Ovary (tissue), 10 donors: ENCODE measurements at regions of chr9 and their contacts with region 1.

Region 1: GRCh38 chr9:79709743-79710674 is 138.2 kb downstream of the TLE4 start:
- DNase-seq: no peak
- H3K4me3 ChIP-seq: no peak overlapping the region
- H3K27ac ChIP-seq: no peak overlapping the region
- H3K4me1 ChIP-seq: no peaks in the 10 kb centered on the region
- H3K27me3 ChIP-seq: no peaks in the 10 kb centered on the region
- CTCF ChIP-seq: no peak
- EP300 ChIP-seq: no peak
- POLR2A ChIP-seq: no peak

Region 2: DNA sequence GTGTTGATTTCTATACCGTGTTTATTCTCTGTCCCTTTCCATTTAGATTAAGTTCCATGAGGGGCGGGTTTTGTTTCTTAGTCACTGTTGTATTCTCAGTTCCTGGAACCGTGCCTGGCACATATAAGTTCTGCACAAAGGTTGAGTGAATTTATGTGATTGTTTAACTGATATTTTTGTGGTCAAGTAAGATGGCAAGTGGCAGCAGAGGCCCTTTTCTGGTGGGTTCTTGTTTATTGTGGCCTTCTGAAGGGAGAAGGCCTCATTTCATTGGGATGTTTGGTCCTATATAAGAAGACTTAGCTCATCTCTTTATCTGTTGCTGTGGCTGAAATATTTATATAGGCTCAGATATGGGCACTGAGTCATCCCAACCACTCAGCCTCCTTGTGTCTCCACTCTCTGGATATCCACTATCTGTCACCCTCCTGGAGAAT is 1150.5 kb before region 1 on chr9:
- intact Hi-C with region 1: loop called in 1 of 4 experiments (anchors 10 kb)
- DNase-seq: no peak
- H3K4me3 ChIP-seq: no peak overlapping the region
- H3K27ac ChIP-seq: no peak overlapping the region
- H3K4me1 ChIP-seq: no peaks in the 10 kb centered on the region
- H3K27me3 ChIP-seq: no peaks in the 10 kb centered on the region
- CTCF ChIP-seq: no peak
- EP300 ChIP-seq: no peak
- POLR2A ChIP-seq: no peak